BJ (cell line): ENCODE measurements at regions of chr6 and their contacts with region 1.

Region 1: DNA sequence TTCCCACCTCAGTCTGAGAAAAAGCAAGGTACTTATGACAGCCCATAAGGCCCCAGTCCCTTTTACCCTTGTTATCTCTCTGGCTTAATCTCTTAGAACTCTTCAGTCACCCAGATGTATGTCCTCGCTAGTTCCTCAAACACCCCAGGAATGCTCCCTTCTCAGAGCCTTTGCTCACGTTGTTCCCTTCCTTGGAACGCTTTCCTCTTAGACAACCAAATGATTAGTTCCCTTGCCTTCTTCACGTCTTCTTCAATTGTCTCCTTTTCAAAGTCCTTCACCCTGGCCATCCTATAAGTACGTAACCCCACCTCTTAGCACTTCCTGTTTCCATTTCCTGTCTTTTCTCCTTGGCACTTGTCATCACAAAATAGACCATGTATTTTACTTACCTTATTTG is 1.1 kb upstream of the APOBEC2 start:
- DNase-seq: no peak
- H3K4me3 ChIP-seq: no peak overlapping the region
- H3K27me3 ChIP-seq: no peaks in the 10 kb centered on the region
- CTCF ChIP-seq: no peak

Region 2: GRCh38 chr6:41013466-41014153 is 38.3 kb before region 1 on chr6:
- CTCF ChIA-PET with region 1: no interaction called
- POLR2A ChIA-PET with region 1: no interaction called
- DNase-seq: no peak
- H3K4me3 ChIP-seq: no peak overlapping the region
- H3K27me3 ChIP-seq: peaks cover 7% of the 10 kb centered on the region
- CTCF ChIP-seq: no peak

Region 3: GRCh38 chr6:41039060-41039998 is 12.5 kb before region 1 on chr6 and contains the start of gene UNC5CL:
- CTCF ChIA-PET with region 1: interaction called, 32 read pairs
- POLR2A ChIA-PET with region 1: no interaction called
- DNase-seq: no peak
- H3K4me3 ChIP-seq: no peak within 1 kb of the TSS
- H3K27me3 ChIP-seq: peaks cover 3% of the 10 kb centered on the region; the same call in 1 of the 2 replicates
- CTCF ChIP-seq: peak; percentile 74
- polyA plus RNA-seq, gene UNC5CL: not detected in 2 replicates